Right lobe of liver (tissue), 6 donors: ENCODE measurements at regions of chr14 and their contacts with region 1.

Region 1: GRCh38 chr14:25431211-25432048 is 381.5 kb upstream of the STXBP6 start:
- DNase-seq: peak; percentile 38 to 56 (median 47)
- ATAC-seq: peak; percentile 75 to 86 (median 82)
- H3K4me3 ChIP-seq: no peak overlapping the region
- H3K27ac ChIP-seq: no peak overlapping the region
- H3K4me1 ChIP-seq: no peaks in the 10 kb centered on the region
- H3K27me3 ChIP-seq: no peaks in the 10 kb centered on the region
- CTCF ChIP-seq: peak; percentile 11 to 61 (median 50)
- POLR2A ChIP-seq: no peak

Region 2: DNA sequence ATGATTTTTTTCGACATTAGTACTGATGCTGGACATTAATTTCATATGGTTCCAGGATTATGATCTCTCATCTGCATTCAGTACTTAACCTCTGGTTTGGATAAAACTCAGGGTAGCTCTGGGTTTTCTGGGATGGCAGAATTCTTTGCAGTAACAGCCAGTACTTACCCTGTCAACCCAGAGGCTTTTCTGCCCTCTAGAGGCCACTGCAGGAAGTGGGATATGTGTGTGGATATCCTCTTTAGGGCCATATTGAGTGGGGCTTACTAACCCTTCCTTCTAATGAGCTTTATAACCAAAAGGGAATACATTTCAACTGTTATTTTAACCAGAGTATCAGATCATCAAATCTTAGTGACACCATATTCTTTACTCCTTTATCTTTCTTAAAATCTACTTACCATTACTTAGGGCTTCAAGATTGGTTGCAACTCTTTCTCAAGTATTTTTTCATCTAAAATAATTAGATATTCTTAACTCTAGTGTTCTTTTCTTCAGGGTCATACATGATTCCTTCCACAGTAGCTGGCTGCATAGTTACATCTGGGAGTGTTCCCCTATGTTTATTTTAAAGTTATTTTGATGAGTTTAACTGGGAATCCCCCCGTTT is 106.5 kb after region 1 on chr14:
- intact Hi-C with region 1: loop called in 1 of 2 experiments (anchors 5 kb)
- DNase-seq: peak in 2 of 3 donors; percentile 26 to 53
- ATAC-seq: peak; percentile 80 to 90 (median 86)
- H3K4me3 ChIP-seq: no peak overlapping the region
- H3K27ac ChIP-seq: no peak overlapping the region
- H3K4me1 ChIP-seq: no peaks in the 10 kb centered on the region
- H3K27me3 ChIP-seq: no peaks in the 10 kb centered on the region
- CTCF ChIP-seq: peak; percentile 28 to 82 (median 54)
- POLR2A ChIP-seq: no peak